ENCODE measurements at regions of chr5 and their contacts with region 1.

Region 1: GRCh38 chr5:160082614-160083500 is 36.4 kb downstream of the PWWP2A start:
- DNase-seq: no peak
- H3K4me3 Mint-ChIP-seq: no peak overlapping the region
- H3K27ac Mint-ChIP-seq: peak overlapping the region; percentile 29
- H3K4me1 Mint-ChIP-seq: peaks cover 14% of the 10 kb centered on the region
- H3K27me3 Mint-ChIP-seq: no peaks in the 10 kb centered on the region
- CTCF ChIP-seq: no peak

Region 2: DNA sequence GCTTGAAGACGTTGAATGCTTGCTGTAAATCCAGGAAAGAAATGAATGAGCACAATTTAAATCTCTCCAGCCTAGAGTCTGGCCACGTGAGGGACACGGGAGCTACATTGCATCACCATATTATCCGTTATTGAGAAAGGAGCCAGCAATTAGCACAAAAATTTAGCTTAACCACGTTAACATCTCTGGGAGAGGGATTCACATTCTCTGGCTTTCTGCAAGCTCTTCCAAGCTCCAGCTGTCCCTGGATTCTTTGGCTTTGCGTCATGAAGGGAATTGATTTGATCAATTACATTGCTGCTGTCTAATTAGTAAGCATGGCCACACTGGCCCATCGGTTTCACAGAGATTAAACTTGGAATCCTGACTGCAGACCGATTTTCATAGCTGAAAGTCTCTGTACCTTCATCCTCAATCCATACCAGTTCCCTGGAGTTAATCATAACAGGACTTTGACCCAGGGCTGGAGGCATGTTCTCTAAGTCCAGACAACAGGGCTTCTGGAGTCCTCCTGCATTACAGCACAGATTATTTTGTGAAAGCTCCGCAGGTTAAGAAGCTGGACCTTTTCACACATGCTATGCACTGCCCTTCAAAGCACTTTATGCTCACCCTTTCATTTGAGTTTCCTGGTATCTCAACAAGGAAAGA is 135.0 kb before region 1 on chr5:
- CTCF ChIA-PET with region 1: no interaction called
- intact Hi-C with region 1: no loop called
- DNase-seq: no peak
- H3K4me3 Mint-ChIP-seq: no peak overlapping the region
- H3K27ac Mint-ChIP-seq: no peak overlapping the region
- H3K4me1 Mint-ChIP-seq: peaks cover 17% of the 10 kb centered on the region
- H3K27me3 Mint-ChIP-seq: no peaks in the 10 kb centered on the region
- CTCF ChIP-seq: no peak

Region 3: DNA sequence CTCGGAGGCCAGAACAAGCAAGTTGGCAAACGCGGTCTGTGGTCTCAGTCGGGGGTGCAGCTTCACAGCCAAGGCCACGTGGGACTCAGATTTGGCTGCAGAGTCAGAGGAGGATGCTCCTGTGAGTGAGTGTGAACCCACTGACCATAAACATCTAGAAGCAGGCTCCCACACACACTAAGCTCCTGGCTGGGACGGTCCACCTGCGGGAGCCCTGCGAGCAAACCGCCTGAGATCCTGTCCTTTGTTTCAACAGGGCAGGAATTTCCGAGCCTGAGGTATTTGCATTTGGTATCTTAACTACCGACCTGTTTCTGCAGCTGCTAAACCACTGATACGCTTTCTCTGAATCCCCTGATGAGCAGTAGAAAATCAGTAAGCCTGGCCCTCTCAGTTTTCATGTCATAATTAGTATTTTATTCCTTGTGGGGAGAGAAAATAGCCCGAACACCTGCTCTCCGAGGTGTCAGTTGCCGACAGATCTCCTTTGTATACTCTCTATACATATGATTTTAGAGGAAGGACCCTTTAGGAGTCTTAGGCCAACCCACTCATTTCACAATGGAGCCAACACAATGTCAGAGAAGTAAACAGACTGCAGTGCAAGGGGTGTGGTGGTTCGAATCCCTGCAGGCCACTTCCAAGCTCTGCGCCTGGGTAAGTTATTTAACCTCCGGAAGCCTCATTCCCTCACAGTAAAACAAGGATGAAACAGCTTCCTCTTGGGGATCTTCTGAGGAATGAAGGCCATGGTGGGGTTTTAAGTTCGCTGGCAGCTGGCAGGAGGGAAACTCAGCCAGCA is 77.3 kb after region 1 on chr5:
- CTCF ChIA-PET with region 1: interaction called, 3 read pairs
- intact Hi-C with region 1: loop called (anchors 5 kb)
- DNase-seq: no peak
- H3K4me3 Mint-ChIP-seq: no peak overlapping the region
- H3K27ac Mint-ChIP-seq: no peak overlapping the region
- H3K4me1 Mint-ChIP-seq: peaks cover 20% of the 10 kb centered on the region
- H3K27me3 Mint-ChIP-seq: no peaks in the 10 kb centered on the region
- CTCF ChIP-seq: no peak

Region 4: DNA sequence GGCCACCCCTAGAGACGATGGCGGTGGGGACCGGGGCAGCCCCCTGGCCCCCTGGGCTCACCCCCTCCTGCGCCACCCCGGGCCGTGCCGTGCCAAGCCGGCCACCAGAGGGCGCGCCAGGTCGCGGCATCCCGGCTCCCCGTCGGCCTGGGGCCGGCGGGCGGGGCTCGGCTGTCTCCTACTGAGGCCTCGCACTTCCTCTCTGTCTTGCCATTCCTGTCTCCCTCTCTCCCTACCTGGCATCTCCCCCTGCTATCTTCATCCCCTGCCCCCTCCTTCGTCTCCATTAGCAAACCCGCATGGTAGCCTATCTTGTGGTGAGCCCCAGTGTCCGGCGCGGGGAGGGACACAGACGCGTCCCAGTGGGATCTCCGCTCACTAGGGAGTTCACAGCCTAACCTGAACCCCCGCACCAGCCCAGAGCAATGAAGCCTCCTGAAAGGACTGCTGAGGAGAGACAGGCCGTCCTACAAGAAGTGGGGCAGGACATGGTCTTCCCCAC is 116.6 kb after region 1 on chr5:
- CTCF ChIA-PET with region 1: interaction called, 4 read pairs
- intact Hi-C with region 1: loop called (anchors 5 kb)
- DNase-seq: peak; percentile 92
- H3K4me3 Mint-ChIP-seq: peak overlapping the region; percentile 68
- H3K27ac Mint-ChIP-seq: peak overlapping the region; percentile 38
- H3K4me1 Mint-ChIP-seq: no peaks in the 10 kb centered on the region
- H3K27me3 Mint-ChIP-seq: no peaks in the 10 kb centered on the region
- CTCF ChIP-seq: peak; percentile 98

Region 5: DNA sequence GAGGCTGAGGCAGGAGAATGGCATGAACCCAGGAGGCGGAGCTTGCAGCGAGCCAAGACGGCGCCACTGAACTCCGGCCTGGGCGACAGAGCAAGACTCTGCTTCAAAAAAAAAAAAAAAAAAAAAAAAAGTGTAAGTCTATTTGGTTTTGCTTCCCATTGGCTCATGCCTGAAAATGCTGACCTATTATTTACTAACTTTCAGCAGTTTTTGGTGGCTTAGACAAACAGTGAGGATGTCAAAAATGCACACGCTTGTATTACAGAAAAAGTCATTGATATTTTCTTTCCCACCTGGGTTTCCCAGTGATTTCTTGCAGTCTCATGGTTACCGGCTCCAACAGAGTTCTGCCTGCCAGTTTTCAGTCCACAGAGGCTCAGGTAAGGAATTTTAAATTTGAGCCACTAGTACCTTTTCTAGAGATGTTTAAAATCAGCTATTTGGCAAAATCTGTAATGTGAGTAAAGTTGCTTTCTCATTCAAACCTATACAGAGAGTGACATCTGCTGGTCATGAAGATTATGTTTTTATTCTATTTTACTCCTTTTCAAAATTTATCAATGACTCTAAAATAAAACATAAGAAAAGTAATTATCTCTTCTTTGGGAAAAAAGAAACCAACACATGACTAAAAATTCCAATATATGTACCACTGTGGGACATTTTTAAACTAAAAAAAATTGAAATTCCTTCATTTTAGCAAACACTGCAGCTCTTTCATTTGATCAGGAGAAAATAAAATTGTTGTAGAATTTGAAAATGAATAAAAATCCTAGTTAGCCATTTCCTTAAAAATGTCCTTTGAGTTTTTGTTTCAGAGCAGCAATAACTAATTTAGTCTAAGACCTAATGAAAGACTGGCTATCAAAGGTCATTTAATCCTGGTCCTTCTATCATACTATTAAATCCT is 308.2 kb after region 1 on chr5:
- CTCF ChIA-PET with region 1: interaction called, 8 read pairs
- intact Hi-C with region 1: loop called (anchors 1 kb)
- DNase-seq: no peak
- H3K4me3 Mint-ChIP-seq: no peak overlapping the region
- H3K27ac Mint-ChIP-seq: no peak overlapping the region
- H3K4me1 Mint-ChIP-seq: no peaks in the 10 kb centered on the region
- H3K27me3 Mint-ChIP-seq: no peaks in the 10 kb centered on the region
- CTCF ChIP-seq: no peak